ENCODE measurements at regions of chrX and their contacts with region 1.

Region 1: DNA sequence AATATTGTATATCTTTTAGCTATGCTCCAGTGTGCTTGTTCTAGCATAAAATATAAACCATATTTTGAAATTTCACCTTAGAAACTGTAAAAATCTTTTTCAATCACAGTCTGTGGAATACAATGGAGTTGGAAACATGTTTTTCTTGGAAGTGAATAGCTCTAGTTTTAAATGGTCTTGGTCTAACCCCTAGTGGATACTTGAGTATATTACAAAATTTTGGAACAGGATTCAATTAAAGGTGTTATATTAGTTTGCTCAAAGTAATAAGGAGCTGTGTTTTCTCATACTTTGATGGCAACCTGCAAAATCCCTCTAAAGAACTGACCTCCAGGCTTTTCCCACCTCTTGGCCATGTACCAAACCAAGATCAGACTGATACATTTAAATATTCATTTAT is 48.2 kb downstream of the STK26 start:
- DNase-seq: no peak
- ATAC-seq: peak; percentile 65; the same call in 1 of the 2 replicates
- H3K4me3 ChIP-seq: no peak overlapping the region
- H3K27ac ChIP-seq: no peak overlapping the region
- H3K4me1 ChIP-seq: no peaks in the 10 kb centered on the region
- H3K27me3 ChIP-seq: no peaks in the 10 kb centered on the region
- CTCF ChIP-seq: peak; percentile 25; the same call in 1 of the 2 replicates

Region 2: DNA sequence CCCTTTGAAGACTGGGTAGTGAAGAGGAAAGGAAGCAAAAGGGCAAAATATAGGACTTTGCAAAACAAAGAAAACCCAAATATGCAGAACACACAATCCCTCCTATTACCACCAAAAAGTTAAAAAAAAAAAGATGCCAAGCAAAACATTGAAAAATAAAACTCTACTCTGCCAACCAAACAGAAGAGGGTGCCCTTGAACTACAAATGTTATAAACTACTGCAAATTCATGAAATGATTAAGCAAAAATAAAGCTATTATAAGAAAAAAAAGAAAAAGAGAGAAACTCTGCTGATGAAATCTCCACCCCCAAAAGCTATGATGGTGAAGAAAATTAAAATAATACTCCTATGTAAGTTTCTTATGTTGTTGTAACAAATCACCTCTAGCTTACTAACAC is 216.7 kb before region 1 on chrX:
- CTCF ChIA-PET with region 1: interaction called, 6 read pairs
- POLR2A ChIA-PET with region 1: no interaction called
- in situ Hi-C with region 1: no loop called
- intact Hi-C with region 1: loop called (anchors 5 kb)
- DNase-seq: no peak
- ATAC-seq: no peak
- H3K4me3 ChIP-seq: no peak overlapping the region
- H3K27ac ChIP-seq: no peak overlapping the region
- H3K4me1 ChIP-seq: no peaks in the 10 kb centered on the region
- H3K27me3 ChIP-seq: no peaks in the 10 kb centered on the region; the same call in 1 of the 2 replicates
- CTCF ChIP-seq: peak; percentile 37; the same call in 1 of the 2 replicates

Region 3: DNA sequence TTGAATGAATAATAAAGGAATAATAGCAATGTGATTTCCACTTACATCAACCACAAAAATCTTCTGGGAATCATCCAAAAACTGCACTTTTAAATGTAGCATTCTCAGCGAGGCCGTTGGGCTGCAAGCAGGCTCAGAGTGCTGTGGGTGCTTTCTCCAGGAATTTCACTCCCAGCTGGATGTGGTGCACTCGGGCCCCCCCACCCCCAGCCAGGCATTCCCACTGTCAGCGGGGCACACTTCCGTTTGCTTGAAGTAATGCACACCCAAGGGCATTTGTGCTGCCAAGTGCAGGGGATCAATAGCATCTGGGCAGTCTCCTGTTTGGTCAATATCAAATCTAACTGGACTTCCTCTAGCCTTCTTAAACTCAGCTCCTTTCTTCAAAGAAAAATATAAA is 56.5 kb after region 1 on chrX and contains the start of gene FRMD7:
- CTCF ChIA-PET with region 1: no interaction called
- POLR2A ChIA-PET with region 1: no interaction called
- in situ Hi-C with region 1: no loop called
- intact Hi-C with region 1: no loop called
- DNase-seq: no peak
- ATAC-seq: no peak
- H3K4me3 ChIP-seq: no peak within 1 kb of the TSS
- H3K27ac ChIP-seq: no peak within 1 kb of the TSS
- H3K4me1 ChIP-seq: no peaks in the 10 kb centered on the region
- H3K27me3 ChIP-seq: no peaks in the 10 kb centered on the region; the same call in 1 of the 2 replicates
- CTCF ChIP-seq: no peak
- total RNA-seq, gene FRMD7: not detected

Region 4: GRCh38 chrX:132984058-132984650 is 912.9 kb after region 1 on chrX:
- CTCF ChIA-PET with region 1: no interaction called
- POLR2A ChIA-PET with region 1: no interaction called
- in situ Hi-C with region 1: no loop called
- intact Hi-C with region 1: no loop called
- DNase-seq: no peak
- ATAC-seq: no peak
- H3K4me3 ChIP-seq: no peak overlapping the region
- H3K27ac ChIP-seq: no peak overlapping the region
- H3K4me1 ChIP-seq: no peaks in the 10 kb centered on the region
- H3K27me3 ChIP-seq: no peaks in the 10 kb centered on the region
- CTCF ChIP-seq: no peak

Measured in Panc1 (cell line).